Heart right ventricle (tissue), 16 donors: ENCODE measurements at regions of chr10 and their contacts with region 1.

Region 1: DNA sequence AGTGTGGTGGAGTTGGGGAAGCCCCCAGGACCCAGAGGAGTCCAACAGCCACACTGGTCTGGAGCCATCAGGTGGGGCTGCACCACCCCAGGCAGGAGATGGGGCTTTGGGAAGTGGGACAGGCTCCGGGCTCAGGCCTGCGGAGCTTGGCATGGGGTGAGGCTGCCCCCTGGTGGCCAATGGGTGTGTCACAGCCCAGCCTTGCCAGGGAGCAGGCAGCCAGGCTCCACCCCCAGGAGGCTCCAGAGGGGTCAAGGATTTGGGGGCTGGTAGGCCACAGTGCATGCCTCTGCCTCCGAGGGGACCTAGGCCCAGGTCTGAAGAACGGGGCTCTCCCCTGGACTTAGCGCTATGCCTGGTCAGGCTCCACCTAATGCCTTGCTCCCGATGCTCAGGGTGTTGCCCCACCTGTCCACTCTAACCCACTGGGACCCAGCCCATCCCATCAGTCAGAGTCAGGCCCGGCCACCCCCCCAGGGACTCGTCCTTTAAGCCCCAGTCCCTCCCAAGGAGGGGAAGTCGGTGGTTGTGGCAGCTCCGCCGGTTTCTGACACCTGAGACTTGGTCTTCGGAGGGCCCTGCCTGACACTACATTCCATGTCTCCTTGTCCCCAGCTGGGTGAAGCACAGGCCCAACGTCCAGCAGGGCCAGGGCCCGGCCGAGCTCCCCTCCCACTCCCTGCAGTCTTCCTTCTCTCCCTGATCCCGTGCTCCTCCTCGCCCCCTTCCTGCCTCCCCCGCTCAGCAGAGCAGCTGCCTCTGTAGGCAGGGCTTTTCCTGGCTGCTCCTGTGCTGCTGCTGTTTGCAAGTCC is 11.3 kb upstream of the SAMD8 start:
- DNase-seq: peak; percentile 78 to 87
- ATAC-seq: peak; percentile 72 to 92 (median 86)
- H3K4me3 ChIP-seq: peak overlapping the region in 3 of 10 donors; percentile 3 to 27 (median 4)
- H3K27ac ChIP-seq: peak overlapping the region in 8 of 10 donors; percentile 6 to 88 (median 72)
- H3K4me1 ChIP-seq: peaks cover 4 to 28% (median 17%) of the 10 kb centered on the region in 9 donors
- H3K27me3 ChIP-seq: no peaks in the 10 kb centered on the region
- CTCF ChIP-seq: peak; percentile 97 to 100 (median 99)

Region 2: DNA sequence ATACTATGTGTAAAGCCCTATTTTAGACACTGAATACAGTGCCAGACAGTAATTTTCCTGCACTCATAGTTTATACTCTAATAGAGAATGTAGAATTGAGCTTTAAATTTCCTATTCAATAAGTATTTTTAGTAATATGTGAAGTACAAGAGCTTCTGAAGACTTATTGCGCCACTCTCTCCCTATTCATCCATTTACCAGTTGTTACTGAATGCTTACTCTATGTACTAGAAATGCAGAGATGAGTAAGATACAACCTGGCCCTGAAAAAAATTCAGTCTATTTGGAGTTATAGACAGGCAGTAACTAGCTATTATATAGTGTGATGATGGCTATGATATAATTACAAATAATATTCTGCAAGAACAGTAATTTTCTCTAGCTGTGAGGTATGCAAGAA is 850.3 kb before region 1 on chr10:
- intact Hi-C with region 1: loop called in 4 of 10 experiments (anchors 1 to 5 kb)
- DNase-seq: no peak
- ATAC-seq: no peak
- H3K4me3 ChIP-seq: no peak overlapping the region
- H3K27ac ChIP-seq: no peak overlapping the region
- H3K4me1 ChIP-seq: no peaks in the 10 kb centered on the region
- H3K27me3 ChIP-seq: no peaks in the 10 kb centered on the region
- CTCF ChIP-seq: no peak

Region 3: GRCh38 chr10:74419958-74420375 is 680.2 kb before region 1 on chr10:
- intact Hi-C with region 1: loop called in 1 of 10 experiments (anchors 10 kb)
- DNase-seq: no peak
- ATAC-seq: no peak
- H3K4me3 ChIP-seq: no peak overlapping the region
- H3K27ac ChIP-seq: no peak overlapping the region
- H3K4me1 ChIP-seq: peaks cover 0 to 6% (median 0%) of the 10 kb centered on the region in 9 donors
- H3K27me3 ChIP-seq: no peaks in the 10 kb centered on the region
- CTCF ChIP-seq: peak in 8 of 9 donors; percentile 21 to 54 (median 38)

Region 4: DNA sequence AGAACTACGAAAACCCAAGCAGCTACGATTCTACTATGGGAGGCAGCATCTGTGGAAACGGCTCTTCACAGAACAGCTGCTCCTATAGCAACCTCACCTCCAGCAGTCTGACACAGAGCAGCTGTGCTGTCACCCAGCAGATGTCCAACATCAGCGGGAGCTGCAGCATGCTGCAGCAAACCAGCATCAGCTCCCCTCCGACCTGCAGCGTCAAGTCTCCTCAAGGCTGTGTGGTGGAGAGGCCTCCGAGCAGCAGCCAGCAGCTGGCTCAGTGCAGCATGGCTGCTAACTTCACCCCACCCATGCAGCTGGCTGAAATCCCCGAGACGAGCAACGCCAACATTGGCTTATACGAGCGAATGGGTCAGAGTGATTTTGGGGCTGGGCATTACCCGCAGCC is 70.3 kb before region 1 on chr10:
- intact Hi-C with region 1: loop called in 4 of 10 experiments (anchors 5 to 10 kb)
- DNase-seq: peak in 1 of 2 donors; percentile 33
- ATAC-seq: peak; percentile 27 to 72 (median 38)
- H3K4me3 ChIP-seq: no peak overlapping the region
- H3K27ac ChIP-seq: no peak overlapping the region
- H3K4me1 ChIP-seq: peaks cover 0 to 17% (median 8%) of the 10 kb centered on the region in 9 donors
- H3K27me3 ChIP-seq: no peaks in the 10 kb centered on the region
- CTCF ChIP-seq: no peak

Region 5: GRCh38 chr10:75062506-75063299 is 37.5 kb before region 1 on chr10:
- intact Hi-C with region 1: no loop called
- DNase-seq: peak in 1 of 2 donors; percentile 27
- ATAC-seq: peak in 5 of 8 donors; percentile 36 to 77 (median 72)
- H3K4me3 ChIP-seq: no peak overlapping the region
- H3K27ac ChIP-seq: peak overlapping the region in 1 of 10 donors; percentile 78
- H3K4me1 ChIP-seq: peaks cover 0 to 9% (median 0%) of the 10 kb centered on the region in 9 donors
- H3K27me3 ChIP-seq: no peaks in the 10 kb centered on the region
- CTCF ChIP-seq: no peak

Region 6: GRCh38 chr10:75137533-75138438 is 37.6 kb after region 1 on chr10:
- intact Hi-C with region 1: no loop called
- DNase-seq: no peak
- ATAC-seq: peak in 7 of 8 donors; percentile 38 to 94 (median 72)
- H3K4me3 ChIP-seq: no peak overlapping the region
- H3K27ac ChIP-seq: peak overlapping the region in 4 of 10 donors; percentile 8 to 15 (median 10)
- H3K4me1 ChIP-seq: peaks cover 0 to 34% (median 25%) of the 10 kb centered on the region in 9 donors
- H3K27me3 ChIP-seq: no peaks in the 10 kb centered on the region
- CTCF ChIP-seq: no peak

Region 7: DNA sequence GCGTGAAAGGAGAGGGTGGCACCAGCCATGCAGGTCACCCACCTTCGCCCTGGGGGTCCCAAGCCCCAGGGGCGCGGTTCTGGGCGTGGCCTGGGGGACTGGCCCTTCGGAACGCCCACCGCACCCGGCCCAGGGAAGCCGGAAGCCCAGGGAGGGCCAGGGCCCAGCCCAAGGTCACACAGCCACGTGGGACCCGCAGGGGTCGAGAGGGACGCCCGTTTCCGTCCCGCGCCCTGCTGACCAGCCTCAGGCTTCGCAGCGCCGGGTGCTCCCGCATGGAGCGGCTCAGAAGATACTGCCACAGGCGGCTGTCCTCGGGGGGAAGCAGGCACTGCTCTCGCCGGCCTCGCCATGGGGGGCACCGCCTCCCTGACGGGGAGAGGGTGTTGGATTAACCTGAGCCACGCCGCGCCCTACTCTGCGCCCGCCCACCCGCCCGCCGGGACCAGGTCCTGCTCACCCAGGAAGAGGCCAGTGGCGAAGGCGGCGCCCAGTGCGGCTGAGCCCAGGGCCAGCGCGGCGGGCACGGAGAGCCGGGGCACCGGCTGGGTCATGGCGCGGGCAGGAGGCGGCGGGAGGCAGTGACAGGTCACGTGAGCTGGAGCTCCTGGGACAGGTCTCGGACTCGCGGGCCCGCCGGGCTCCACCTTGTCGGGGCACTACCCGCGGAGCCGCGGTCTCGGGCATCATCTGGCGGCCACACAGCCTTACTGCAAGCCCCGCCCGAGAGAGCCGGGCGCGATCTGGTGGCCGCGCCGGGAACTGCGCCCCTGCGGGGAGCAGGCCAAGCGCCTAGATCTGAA is 135.4 kb after region 1 on chr10 and contains the start of gene COMTD1:
- intact Hi-C with region 1: loop called in 1 of 10 experiments (anchors 5 kb)
- DNase-seq: peak; percentile 90 to 94
- ATAC-seq: peak; percentile 72 to 88 (median 82)
- H3K4me3 ChIP-seq: peak within 1 kb of the TSS; percentile 67 to 95 (median 86)
- H3K27ac ChIP-seq: peak within 1 kb of the TSS; percentile 6 to 93 (median 88)
- H3K4me1 ChIP-seq: peaks cover 0 to 29% (median 16%) of the 10 kb centered on the region in 9 donors
- H3K27me3 ChIP-seq: no peaks in the 10 kb centered on the region
- CTCF ChIP-seq: peak; percentile 100
- total RNA-seq, gene COMTD1: 16.4 to 51.5 (median 29.4) TPM